ENCODE measurements at regions of chr19 and their contacts with region 1.

Region 1: GRCh38 chr19:41696402-41697197 is 8.5 kb upstream of the CEACAM7 start:
- DNase-seq: peak; percentile 46
- H3K4me3 Mint-ChIP-seq: no peak overlapping the region
- H3K27ac Mint-ChIP-seq: no peak overlapping the region
- H3K4me1 Mint-ChIP-seq: peaks cover 30% of the 10 kb centered on the region
- H3K27me3 Mint-ChIP-seq: peaks cover 18% of the 10 kb centered on the region
- CTCF ChIP-seq: no peak

Region 2: GRCh38 chr19:41668315-41668714 is 28.3 kb before region 1 on chr19:
- CTCF ChIA-PET with region 1: no interaction called
- intact Hi-C with region 1: no loop called
- DNase-seq: no peak
- H3K4me3 Mint-ChIP-seq: no peak overlapping the region
- H3K27ac Mint-ChIP-seq: no peak overlapping the region
- H3K4me1 Mint-ChIP-seq: no peaks in the 10 kb centered on the region
- H3K27me3 Mint-ChIP-seq: peaks cover 79% of the 10 kb centered on the region
- CTCF ChIP-seq: no peak

Region 3: DNA sequence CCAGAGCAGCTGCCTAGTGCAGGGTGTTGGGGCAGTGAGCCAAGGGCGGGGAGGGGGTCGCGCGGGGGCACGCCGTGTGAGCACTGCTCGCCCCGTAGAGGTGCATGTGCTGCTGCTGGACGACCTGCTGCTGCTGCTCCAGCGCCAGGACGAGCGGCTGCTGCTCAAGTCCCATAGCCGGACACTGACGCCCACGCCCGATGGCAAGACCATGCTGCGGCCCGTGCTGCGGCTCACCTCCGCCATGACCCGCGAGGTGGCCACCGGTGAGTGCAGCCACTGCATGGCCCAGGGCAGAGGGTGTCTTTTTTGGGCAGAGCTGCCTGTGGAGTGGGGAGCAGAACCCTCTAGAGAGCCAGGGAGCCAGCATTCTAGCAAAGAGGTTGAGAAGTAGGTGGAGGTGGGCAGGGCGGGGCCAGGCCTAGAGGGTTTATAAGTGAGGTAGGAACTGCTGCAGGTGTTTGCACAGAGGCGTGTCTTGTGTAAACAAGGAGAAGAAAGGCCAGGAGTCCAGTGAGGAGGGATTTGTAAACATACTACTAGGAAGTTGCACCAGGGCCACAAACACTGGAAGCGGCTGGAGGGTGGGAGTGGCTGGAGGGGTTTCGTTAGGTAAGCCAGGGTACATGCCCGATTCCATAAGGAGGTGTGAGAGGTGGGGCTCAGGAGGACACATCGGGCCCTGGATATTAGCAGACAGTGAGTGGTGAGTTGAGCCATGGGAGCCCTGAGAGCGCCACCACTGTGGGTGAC is 207.7 kb after region 1 on chr19:
- CTCF ChIA-PET with region 1: interaction called, 14 read pairs
- intact Hi-C with region 1: no loop called
- DNase-seq: peak; percentile 91
- H3K4me3 Mint-ChIP-seq: peak overlapping the region; percentile 43
- H3K27ac Mint-ChIP-seq: peak overlapping the region; percentile 70
- H3K4me1 Mint-ChIP-seq: peaks cover 41% of the 10 kb centered on the region
- H3K27me3 Mint-ChIP-seq: no peaks in the 10 kb centered on the region
- CTCF ChIP-seq: no peak

Measured in Calu3 (cell line).